PC-3 (cell line): ENCODE measurements at regions of chrX and their contacts with region 1.

Region 1: GRCh38 chrX:51487960-51488267 is 8.5 kb downstream of the NUDT11 start:
- DNase-seq: no peak
- ATAC-seq: no peak
- H3K4me3 ChIP-seq: no peak overlapping the region
- H3K27ac ChIP-seq: no peak overlapping the region
- H3K4me1 ChIP-seq: peaks cover 8% of the 10 kb centered on the region; the same call in 1 of the 2 replicates
- H3K27me3 ChIP-seq: no peaks in the 10 kb centered on the region
- CTCF ChIP-seq: 0 out of 2 replicates have a peak, but pooled peaks have one; percentile 8

Region 2: DNA sequence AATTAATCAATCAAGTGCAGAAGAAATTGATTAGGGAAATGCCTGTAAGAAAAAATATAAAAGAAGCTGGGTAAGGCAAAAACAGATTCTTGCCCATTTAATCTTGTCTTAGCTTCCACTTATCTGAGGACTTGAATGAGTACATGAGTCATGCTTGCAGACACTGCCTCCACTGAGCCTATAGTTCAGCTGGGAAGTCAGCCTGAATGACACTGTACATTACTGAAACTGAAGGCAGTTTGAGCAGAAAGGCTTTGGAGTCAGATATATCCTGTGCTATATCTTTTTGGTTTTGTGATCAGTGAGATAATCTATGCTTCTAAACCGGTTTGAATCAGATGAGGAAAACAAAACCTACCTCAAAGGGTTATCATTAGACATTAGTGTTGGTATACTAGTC is 52.8 kb before region 1 on chrX:
- CTCF ChIA-PET with region 1: no interaction called
- POLR2A ChIA-PET with region 1: no interaction called
- intact Hi-C with region 1: no loop called
- DNase-seq: no peak
- ATAC-seq: no peak
- H3K4me3 ChIP-seq: no peak overlapping the region
- H3K27ac ChIP-seq: no peak overlapping the region
- H3K4me1 ChIP-seq: no peaks in the 10 kb centered on the region
- H3K27me3 ChIP-seq: no peaks in the 10 kb centered on the region
- CTCF ChIP-seq: no peak

Region 3: GRCh38 chrX:51614353-51615012 is 126.6 kb after region 1 on chrX:
- CTCF ChIA-PET with region 1: no interaction called
- POLR2A ChIA-PET with region 1: no interaction called
- intact Hi-C with region 1: loop called (anchors 5 kb)
- DNase-seq: peak; percentile 61
- ATAC-seq: peak; percentile 55
- H3K4me3 ChIP-seq: no peak overlapping the region
- H3K27ac ChIP-seq: no peak overlapping the region
- H3K4me1 ChIP-seq: no peaks in the 10 kb centered on the region
- H3K27me3 ChIP-seq: peaks cover 37% of the 10 kb centered on the region
- CTCF ChIP-seq: peak; percentile 72

Region 4: GRCh38 chrX:52261463-52262194 is 773.7 kb after region 1 on chrX:
- CTCF ChIA-PET with region 1: interaction called, 8 read pairs
- POLR2A ChIA-PET with region 1: no interaction called
- intact Hi-C with region 1: loop called (anchors 1 kb)
- DNase-seq: peak; percentile 80
- ATAC-seq: peak; percentile 98
- H3K4me3 ChIP-seq: peak overlapping the region; percentile 80
- H3K27ac ChIP-seq: peak overlapping the region; percentile 54
- H3K4me1 ChIP-seq: peaks cover 11% of the 10 kb centered on the region
- H3K27me3 ChIP-seq: no peaks in the 10 kb centered on the region
- CTCF ChIP-seq: peak; percentile 94